Motor neuron (in vitro differentiated cells): ENCODE measurements at regions of chr7 and their contacts with region 1.

Region 1: DNA sequence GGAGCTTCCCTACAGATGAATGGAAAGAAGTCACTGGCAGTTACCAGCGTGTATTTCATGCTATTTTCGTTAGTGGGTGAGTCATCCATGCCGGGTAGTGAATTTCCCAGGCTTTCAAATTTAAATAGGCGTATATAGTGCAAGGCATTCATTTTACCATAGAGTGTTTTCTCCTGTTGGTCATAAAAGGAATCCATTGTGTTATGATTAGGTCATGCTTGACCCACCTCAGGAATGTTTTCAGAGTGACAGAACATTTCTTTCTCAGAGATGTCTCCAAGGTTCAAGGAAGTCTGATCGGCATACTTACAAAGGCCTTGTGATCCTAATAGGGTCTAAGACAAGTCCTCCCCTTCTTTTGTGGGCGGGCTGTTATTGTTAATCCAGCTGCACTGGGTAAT is 110.7 kb downstream of the AKR1D1 start:
- ATAC-seq: peak; percentile 94 to 99 (median 98)
- H3K4me3 ChIP-seq: peak overlapping the region in 1 of 5 donors; percentile 13
- H3K27ac ChIP-seq: peak overlapping the region; percentile 83 to 85
- H3K4me1 ChIP-seq: peaks cover 10 to 15% of the 10 kb centered on the region in 2 donors

Region 2: DNA sequence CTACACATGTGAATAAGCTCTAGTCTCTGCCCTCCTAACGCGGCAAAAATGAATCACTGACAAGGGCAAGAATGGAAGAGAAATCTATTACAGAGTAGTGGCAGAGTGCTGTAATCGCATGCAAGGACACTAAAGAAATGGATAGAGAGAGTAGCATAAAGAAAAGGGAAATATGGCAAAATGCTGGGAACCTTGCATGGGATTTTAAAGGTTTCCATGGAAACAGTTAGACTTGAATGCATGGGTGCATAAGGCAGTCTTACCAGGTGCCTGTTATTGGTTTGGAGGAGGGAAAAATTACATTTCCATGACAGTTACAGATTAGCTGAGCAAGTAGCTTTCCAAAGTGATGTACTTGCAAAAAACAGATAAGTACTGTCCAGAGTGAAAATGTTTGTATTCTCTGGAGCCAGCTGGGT is 1076.9 kb before region 1 on chr7:
- in situ Hi-C with region 1: no loop called
- ATAC-seq: peak in 5 of 8 experiments; percentile 73 to 91 (median 77)
- H3K4me3 ChIP-seq: no peak overlapping the region
- H3K27ac ChIP-seq: no peak overlapping the region
- H3K4me1 ChIP-seq: peaks cover 0 to 10% of the 10 kb centered on the region in 2 donors

Region 3: GRCh38 chr7:137354396-137354795 is 832.6 kb before region 1 on chr7:
- in situ Hi-C with region 1: no loop called
- ATAC-seq: peak in 1 of 8 experiments; percentile 21
- H3K4me3 ChIP-seq: no peak overlapping the region
- H3K27ac ChIP-seq: no peak overlapping the region
- H3K4me1 ChIP-seq: no peaks in the 10 kb centered on the region

Region 4: GRCh38 chr7:138459413-138460175 is 272.6 kb after region 1 on chr7:
- in situ Hi-C with region 1: loop called in 1 of 9 experiments (anchors 25 kb)
- ATAC-seq: peak; percentile 84 to 88 (median 87)
- H3K4me3 ChIP-seq: peak overlapping the region; percentile 75 to 95 (median 85)
- H3K27ac ChIP-seq: no peak overlapping the region
- H3K4me1 ChIP-seq: peaks cover 3 to 8% of the 10 kb centered on the region in 2 donors

Region 5: DNA sequence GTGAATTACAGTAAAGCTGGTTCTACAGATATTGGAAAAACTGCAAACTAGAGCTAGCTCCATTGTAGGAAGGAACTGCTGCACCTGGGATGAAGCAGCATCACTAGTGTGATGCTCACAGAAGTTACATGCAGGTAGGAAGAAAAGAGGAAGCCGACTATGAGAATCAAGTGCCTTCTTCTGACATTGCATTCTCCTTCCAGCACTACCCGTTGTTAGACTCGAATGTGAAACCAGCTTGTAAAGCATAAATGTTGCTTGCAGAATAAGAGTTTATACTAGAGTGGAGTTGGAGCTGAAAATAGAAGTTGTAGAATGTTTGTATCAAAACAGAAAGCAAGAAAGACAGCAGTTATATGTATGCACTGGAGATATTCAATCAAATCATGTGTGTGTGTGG is 323.1 kb after region 1 on chr7:
- in situ Hi-C with region 1: no loop called
- ATAC-seq: no peak
- H3K4me3 ChIP-seq: no peak overlapping the region
- H3K27ac ChIP-seq: no peak overlapping the region
- H3K4me1 ChIP-seq: no peaks in the 10 kb centered on the region

Region 6: DNA sequence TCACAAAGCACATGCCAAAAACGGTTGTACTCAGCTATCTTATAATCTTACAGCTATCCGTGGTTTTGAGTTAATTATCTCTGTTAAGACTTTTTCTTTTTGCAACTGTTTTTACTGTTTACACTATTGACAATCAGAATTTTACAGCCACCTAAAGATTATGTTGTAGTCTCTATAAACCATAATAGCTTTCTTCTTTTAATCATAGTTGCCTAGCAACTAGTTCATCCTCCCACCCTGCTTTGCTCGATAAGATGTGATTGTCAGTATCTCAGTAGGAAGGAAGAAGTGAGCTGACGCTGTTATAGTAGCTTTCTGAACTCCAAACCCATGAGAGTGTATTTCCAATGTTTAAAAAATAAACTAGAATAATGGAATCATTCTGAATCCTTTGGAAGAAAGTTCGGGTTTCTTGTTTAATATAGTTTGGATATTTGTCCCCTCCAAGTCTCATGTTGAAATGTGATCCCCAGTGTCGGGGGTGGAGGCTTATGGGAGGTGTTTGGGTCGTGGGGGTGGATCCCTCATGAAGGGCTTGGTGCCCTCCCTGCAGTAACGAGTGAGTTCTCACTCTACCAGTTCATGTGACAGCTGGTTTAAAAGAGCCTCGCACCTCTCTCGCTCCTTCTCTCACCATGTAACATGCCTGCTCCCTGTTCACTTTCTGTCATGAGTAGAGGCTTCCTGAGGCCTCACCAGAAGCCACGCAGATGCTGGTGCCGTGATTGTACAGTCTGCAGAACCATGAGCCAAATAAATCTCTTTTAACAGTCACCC is 446.1 kb after region 1 on chr7:
- in situ Hi-C with region 1: no loop called
- ATAC-seq: no peak
- H3K4me3 ChIP-seq: no peak overlapping the region
- H3K27ac ChIP-seq: no peak overlapping the region
- H3K4me1 ChIP-seq: no peaks in the 10 kb centered on the region